Posterior vena cava (tissue), 2 donors: ENCODE measurements at regions of chr18 and their contacts with region 1.

Region 1: GRCh38 chr18:12657684-12658425 is at the start of gene SPIRE1:
- DNase-seq: peak; percentile 91
- total RNA-seq, gene SPIRE1: 32.3 to 47.8 TPM

Region 2: GRCh38 chr18:11851146-11851805 is 806.6 kb before region 1 on chr18 and contains the start of gene CHMP1B:
- intact Hi-C with region 1: loop called in 1 of 2 experiments (anchors 5 kb)
- DNase-seq: peak; percentile 100
- total RNA-seq, gene CHMP1B: 44.0 to 44.4 TPM

Region 3: DNA sequence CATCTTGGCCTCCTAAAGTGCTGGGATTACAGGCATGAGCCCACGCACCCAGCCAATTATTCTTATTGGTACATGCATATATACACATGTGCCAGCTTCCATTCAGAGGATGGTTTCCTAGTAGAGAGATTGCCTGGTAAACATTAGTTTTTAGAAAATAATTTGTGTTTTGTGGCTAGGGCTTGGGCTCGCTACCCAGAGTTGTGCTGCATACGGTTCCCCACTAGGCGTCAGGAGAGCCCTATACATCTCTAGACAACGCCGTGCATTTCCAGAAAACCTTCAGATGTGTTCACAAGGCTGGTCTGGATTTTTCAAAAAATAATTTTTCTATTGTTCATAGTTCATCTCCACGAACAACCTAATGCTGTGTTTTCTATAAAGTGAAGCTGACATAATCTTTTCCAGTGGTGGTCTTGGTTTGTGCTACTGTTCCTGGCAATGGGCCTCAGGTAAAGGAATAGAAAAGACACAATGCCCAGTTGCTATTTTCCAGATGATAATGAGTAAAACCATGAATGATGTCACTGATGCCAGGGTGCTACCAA is 266.2 kb before region 1 on chr18:
- intact Hi-C with region 1: loop called (anchors 5 kb)
- DNase-seq: no peak

Region 4: GRCh38 chr18:12397254-12397653 is 260.6 kb before region 1 on chr18:
- intact Hi-C with region 1: loop called (anchors 5 kb)
- DNase-seq: peak; percentile 22